AG04450 (cell line): ENCODE measurements at regions of chr2 and their contacts with region 1.

Region 1: GRCh38 chr2:170671079-170671478 is 44.1 kb upstream of the SP5 start:
- DNase-seq: no peak
- H3K4me3 ChIP-seq: no peak overlapping the region
- H3K27ac ChIP-seq: no peak overlapping the region
- H3K27me3 ChIP-seq: no peaks in the 10 kb centered on the region
- CTCF ChIP-seq: no peak

Region 2: DNA sequence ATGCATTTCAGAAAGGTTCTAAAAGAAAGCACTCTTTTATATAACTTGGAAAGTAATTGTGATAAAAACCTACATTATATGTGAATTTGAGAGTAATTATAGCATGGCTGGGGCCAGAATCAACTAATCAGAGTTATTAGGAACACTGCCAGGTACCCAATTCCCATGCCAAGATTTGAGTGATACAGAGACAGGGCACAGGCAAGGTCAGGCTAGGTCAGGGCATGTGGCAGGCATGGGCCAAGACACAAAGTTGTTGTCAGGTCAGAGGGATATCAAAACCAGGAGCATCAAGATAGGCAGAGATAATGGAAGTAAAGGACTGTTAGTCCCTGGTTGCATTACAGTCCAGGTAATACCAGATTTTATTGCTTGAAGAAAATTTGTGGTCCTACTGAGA is 405.8 kb before region 1 on chr2:
- CTCF ChIA-PET with region 1: no interaction called
- POLR2A ChIA-PET with region 1: no interaction called
- DNase-seq: no peak
- H3K4me3 ChIP-seq: no peak overlapping the region
- H3K27ac ChIP-seq: no peak overlapping the region
- H3K27me3 ChIP-seq: no peaks in the 10 kb centered on the region
- CTCF ChIP-seq: no peak

Region 3: DNA sequence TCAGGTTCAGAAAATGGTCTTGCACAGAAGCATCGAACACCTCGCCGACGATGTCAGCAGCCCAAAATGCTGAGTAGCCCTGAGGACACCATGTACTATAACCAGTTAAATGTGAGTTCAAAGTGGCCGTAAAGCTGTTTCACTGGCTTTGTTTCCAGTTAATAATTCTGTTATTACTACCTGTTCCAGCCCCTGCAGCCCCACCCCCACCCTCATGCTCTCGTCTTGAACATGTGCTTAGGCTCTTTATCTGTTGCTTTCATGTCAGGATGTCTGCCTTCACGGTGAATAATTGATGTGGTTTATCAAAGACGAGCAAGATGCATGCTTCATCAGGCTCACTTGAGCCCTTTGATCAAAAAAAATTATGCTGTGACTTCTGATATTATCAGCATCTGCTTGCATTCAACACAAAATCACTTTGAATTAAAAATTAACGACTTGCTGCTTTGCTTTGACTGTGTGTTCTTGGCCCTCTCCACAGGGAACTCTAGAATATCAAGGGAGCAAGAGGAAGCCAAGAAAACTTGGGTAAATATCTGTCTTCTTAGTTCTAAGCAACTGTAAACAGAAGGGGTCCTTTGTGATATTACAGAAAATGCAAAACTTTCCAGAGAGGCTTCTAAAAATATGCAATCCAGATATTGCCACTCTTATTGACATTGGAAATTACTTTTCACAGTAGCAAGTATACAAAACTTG is 19.3 kb before region 1 on chr2:
- CTCF ChIA-PET with region 1: interaction called, 13 read pairs
- POLR2A ChIA-PET with region 1: no interaction called
- DNase-seq: no peak
- H3K4me3 ChIP-seq: no peak overlapping the region
- H3K27ac ChIP-seq: no peak overlapping the region
- H3K27me3 ChIP-seq: no peaks in the 10 kb centered on the region
- CTCF ChIP-seq: no peak

Region 4: GRCh38 chr2:170862286-170862902 is 191.3 kb after region 1 on chr2:
- CTCF ChIA-PET with region 1: no interaction called
- POLR2A ChIA-PET with region 1: no interaction called
- DNase-seq: no peak
- H3K4me3 ChIP-seq: no peak overlapping the region
- H3K27ac ChIP-seq: no peak overlapping the region
- H3K27me3 ChIP-seq: no peaks in the 10 kb centered on the region
- CTCF ChIP-seq: no peak

Region 5: DNA sequence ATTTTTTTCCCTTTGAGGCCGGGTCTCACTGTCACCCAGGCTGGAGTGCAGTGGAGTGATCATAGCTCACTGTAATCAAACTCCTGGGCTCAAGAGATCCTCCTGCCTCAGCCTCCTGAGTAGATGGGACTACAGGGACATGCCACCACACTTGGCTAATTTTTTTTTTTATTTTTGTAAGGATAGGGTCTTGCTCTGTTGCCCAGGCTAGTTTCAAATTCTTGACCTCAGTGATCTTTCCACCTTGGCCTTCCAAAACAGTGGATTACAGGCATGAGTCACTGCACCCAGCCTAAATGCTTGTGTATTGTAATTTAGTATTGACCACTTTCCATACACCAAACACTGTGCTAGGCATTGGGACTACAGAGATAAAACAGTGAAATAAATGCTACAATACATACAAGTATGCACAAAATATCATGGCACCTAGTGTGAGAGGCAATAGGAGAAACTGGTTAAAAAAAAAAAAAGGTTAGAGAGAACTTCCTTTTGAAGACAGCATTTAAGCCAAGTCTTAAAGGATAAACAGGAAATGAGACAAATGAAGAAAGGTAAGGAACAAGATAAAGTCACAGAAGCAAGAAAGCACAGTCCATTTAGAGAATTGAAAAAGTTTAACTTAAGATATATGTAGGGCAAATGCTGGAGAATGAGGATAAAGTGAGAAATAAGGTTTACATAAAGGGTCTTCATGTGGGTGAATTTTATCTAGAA is 371.3 kb after region 1 on chr2:
- CTCF ChIA-PET with region 1: no interaction called
- POLR2A ChIA-PET with region 1: no interaction called
- DNase-seq: no peak
- H3K4me3 ChIP-seq: no peak overlapping the region
- H3K27ac ChIP-seq: no peak overlapping the region
- H3K27me3 ChIP-seq: no peaks in the 10 kb centered on the region
- CTCF ChIP-seq: no peak